ENCODE measurements at regions of chr20 and their contacts with region 1.

Region 1: DNA sequence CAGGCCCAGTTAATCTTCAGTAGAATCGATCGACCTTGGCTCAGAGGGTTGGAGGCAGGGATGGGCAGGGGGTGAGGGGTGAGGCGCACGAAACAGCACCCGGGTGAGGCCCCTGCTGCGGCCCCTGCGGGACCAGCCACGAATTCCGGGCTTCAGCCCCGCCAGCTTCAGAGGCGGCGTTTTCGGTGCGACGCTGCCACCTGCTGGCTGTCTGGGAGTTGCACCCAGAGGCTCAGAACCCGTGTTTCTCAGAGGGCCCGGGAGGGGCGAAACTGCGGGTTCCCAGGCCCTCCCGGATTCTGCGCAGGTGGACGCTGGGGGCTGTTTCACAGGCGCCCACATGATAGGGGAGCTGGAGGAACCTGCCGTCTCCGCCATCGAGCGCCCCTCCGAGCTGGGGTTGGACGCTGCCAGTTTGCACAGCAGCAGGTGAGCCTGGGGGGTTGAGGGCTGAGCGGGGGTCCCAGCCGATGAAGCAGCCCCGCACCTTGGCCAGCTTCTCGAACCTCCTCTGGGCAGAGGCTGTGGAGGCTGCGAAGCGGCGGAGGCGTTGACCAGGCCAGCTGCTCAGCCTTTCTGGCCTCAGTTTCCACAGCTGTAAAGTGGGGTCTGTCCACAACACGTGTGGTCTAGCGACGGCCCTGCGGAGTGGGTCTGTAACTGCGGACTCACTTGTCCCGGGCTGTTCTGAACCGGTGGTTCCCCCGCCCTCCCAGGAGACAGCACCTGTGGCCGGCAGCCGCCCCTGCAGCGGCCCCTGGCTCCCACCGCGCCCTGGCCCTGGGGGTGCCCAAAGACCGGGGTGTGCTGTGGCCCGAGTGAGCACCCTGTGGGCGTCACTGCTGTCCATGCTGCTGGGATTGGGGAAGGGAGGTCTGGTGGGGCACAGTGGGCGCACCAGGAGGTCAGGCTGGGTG is 2.5 kb upstream of the BHLHE23 start:
- DNase-seq: peak; percentile 49
- H3K4me3 ChIP-seq: no peak overlapping the region
- H3K27ac ChIP-seq: no peak overlapping the region
- H3K4me1 ChIP-seq: peaks cover 10% of the 10 kb centered on the region
- H3K27me3 ChIP-seq: peaks cover 57% of the 10 kb centered on the region
- CTCF ChIP-seq: peak; percentile 78 to 97 (median 94)
- POLR2A ChIP-seq: no peak

Region 2: DNA sequence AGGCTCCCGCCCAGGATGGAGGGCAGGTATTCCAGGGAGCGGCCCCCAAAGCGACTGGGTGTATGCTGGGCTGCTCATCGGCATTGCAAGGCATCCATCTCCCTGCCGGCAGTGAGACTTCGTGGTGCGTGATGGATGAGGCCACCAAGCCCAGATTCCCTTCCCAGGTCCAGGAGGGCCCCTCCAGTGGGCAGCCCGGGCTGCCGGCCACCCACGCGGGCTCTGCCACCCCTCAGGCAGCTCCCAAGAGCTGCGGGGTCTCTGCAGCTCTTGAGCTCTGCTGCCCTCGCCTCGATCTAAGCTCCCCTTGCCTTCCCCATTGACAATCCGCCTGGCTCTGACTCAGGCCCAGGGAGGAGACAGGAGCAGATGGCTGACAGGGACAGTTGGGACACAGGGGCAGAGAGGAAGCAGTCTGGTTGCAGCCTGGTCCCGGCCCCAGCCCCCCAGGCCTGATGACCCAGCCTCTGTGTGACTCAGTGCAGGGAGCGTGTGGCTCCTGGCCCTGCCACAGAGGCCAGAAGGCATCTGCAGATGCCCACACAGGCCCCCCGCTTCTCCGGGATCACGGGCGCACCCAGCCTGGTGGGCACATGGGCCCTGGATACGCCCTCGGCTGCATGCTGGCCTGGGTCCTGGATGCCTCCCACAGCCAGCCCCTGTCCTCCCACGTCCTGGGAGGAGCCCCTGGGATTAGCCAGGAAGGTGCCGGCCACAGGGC is 334.0 kb before region 1 on chr20:
- intact Hi-C with region 1: loop called (anchors 10 kb)
- DNase-seq: no peak
- H3K4me3 ChIP-seq: no peak overlapping the region
- H3K27ac ChIP-seq: no peak overlapping the region
- H3K4me1 ChIP-seq: no peaks in the 10 kb centered on the region
- H3K27me3 ChIP-seq: peaks cover 3% of the 10 kb centered on the region
- CTCF ChIP-seq: no peak
- POLR2A ChIP-seq: no peak

Region 3: DNA sequence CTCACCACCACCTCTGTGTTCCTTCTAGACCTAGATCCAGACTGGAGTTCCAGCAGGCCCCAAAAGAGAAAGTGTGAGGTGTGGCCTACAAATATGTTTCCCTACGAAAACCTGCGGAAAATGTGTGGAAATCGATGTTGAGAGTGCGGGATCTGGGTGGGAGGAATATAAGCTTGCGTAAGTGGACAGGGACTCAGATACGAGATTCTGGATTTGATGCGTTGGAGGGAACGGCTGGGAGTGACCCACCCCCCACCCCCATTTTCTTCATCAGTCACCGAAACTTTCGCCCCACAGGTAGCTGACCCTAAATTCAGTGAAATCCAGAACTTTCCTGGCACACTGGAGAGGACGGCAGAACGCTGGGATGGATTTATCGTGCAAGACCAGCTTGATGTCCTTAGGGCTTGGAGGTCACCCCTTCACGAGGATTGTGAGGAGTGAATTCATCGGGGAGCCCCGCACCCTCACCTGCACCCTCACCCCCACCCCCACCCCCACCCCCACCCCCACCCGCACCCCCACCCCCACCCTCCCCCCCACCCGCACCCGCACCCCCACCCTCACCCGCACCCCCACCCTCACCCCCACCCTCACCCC is 134.5 kb before region 1 on chr20:
- intact Hi-C with region 1: loop called (anchors 5 kb)
- DNase-seq: no peak
- H3K4me3 ChIP-seq: no peak overlapping the region
- H3K27ac ChIP-seq: no peak overlapping the region
- H3K4me1 ChIP-seq: no peaks in the 10 kb centered on the region
- H3K27me3 ChIP-seq: no peaks in the 10 kb centered on the region
- CTCF ChIP-seq: no peak
- POLR2A ChIP-seq: no peak

Region 4: GRCh38 chr20:62900052-62900691 is 109.1 kb before region 1 on chr20:
- intact Hi-C with region 1: loop called (anchors 5 kb)
- DNase-seq: peak; percentile 78
- H3K4me3 ChIP-seq: no peak overlapping the region
- H3K27ac ChIP-seq: peak overlapping the region; percentile 75 to 78
- H3K4me1 ChIP-seq: peaks cover 10% of the 10 kb centered on the region
- H3K27me3 ChIP-seq: no peaks in the 10 kb centered on the region
- CTCF ChIP-seq: peak; percentile 75 to 96 (median 88)
- POLR2A ChIP-seq: no peak

Region 5: DNA sequence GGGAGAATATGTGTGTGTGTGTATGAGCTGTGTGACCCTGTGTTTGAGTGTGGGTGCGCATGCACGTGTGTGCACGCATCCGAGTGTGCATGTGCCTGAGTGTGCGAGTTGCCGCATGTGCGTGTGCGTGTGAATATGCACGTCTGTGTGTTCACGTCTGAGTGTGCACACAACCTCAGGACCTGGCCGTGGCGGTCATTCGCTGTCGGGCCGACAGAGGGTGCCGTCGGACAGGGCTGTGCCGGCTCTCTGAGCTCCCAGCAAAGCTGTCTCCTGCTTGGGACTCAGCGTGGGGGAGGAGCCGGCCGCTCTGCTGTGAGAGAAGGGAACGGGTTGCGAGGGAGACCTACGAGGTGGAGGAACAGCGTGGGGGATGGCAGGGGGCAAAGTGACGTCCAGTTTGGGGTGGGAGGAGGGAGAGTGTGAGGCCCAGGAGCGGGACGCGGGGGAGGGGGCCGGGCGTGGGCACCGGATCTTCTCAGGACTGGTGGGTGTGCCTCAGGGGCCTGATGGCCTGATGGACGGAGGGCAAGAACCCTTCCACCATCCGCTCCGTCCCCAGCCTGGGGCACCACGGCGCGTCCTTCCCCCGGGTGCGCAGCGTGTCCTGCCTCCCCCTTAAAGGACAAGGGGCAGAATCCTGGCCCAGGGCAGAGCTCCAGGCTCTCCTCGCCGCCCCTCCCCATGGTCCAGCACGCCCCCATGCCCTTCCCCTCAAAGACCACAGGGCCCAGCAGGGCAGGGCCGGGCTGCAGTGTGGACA is 36.9 kb before region 1 on chr20:
- intact Hi-C with region 1: loop called (anchors 1 kb)
- DNase-seq: peak; percentile 77
- H3K4me3 ChIP-seq: no peak overlapping the region
- H3K27ac ChIP-seq: no peak overlapping the region
- H3K4me1 ChIP-seq: no peaks in the 10 kb centered on the region
- H3K27me3 ChIP-seq: peaks cover 26% of the 10 kb centered on the region
- CTCF ChIP-seq: peak; percentile 42 to 95 (median 80)
- POLR2A ChIP-seq: no peak